HepG2 (cell line): ENCODE measurements at regions of chr2 and their contacts with region 1.

Region 1: DNA sequence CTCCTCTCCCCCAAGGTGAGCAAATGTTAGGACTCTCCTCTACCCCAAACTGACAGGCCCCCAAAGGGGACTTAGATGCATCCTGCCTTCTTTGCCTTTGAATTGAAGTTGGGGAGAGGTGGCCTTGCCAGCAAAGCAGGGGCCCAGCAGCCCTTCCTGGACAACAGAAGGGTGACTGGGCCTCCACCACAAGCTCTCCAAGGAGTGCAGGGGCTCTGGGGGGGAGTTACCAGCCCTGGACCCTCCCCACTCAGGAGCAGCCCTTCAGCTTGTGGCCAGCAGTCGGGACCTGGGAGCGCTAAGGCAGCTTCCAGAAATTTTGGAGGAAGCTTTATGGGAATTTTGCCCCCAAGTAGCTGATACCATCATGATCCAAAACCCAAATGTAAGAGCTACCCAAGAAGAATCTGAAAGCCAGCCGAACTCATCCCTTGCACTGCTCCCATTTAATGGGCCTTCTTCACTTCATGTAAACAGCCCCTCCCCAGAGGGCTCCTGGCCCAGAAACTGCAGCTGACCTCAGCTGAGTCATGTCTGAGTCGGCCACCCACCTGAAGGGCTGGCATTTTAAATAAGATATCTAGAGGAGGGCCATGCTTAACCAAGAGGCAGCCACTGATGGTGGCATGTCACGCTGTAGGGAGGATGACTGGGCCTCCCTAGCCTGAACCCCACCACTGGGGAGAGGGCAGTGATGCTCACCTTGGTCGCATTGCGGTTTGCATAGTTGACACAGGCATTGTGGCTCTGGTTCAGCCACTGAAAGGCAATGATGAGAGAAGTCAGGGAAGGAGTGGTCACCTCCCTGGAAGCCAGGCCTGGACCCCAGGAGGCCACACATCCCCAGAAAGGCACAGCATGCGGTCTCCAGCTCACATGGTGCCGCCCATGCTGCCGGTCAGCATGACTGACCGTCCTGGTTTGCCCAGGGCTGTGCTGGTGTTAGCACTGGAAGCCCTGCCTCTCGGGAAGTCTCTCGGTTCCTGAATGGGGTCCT is 71.5 kb downstream of the SFXN5 start:
- DNase-seq: no peak
- ATAC-seq: no peak; the same call in 2 of the 3 replicates
- H3K4me3 ChIP-seq: no peak overlapping the region
- H3K27ac ChIP-seq: peak overlapping the region; percentile 73
- H3K4me1 ChIP-seq: peaks cover 27% of the 10 kb centered on the region
- H3K27me3 ChIP-seq: no peaks in the 10 kb centered on the region
- CTCF ChIP-seq: no peak
- EP300 ChIP-seq: no peak
- POLR2A ChIP-seq: no peak
- RAD21 ChIP-seq: no peak

Region 2: GRCh38 chr2:73020657-73021370 is 20.8 kb after region 1 on chr2:
- CTCF ChIA-PET with region 1: no interaction called
- POLR2A ChIA-PET with region 1: interaction called, 13 read pairs
- in situ Hi-C with region 1: no loop called
- intact Hi-C with region 1: no loop called
- DNase-seq: peak; percentile 97
- ATAC-seq: peak; percentile 91
- H3K4me3 ChIP-seq: peak overlapping the region in 1 of 3 experiments; percentile 29; a peak in 1 of 6 replicates
- H3K27ac ChIP-seq: peak overlapping the region; percentile 71
- H3K4me1 ChIP-seq: peaks cover 35% of the 10 kb centered on the region
- H3K27me3 ChIP-seq: no peaks in the 10 kb centered on the region
- CTCF ChIP-seq: 0 out of 2 replicates have a peak, but pooled peaks have one; percentile 14
- EP300 ChIP-seq: peak in 1 of 2 experiments; percentile 79; a peak in 2 of 4 replicates
- POLR2A ChIP-seq: no peak
- RAD21 ChIP-seq: peak; percentile 51

Region 3: DNA sequence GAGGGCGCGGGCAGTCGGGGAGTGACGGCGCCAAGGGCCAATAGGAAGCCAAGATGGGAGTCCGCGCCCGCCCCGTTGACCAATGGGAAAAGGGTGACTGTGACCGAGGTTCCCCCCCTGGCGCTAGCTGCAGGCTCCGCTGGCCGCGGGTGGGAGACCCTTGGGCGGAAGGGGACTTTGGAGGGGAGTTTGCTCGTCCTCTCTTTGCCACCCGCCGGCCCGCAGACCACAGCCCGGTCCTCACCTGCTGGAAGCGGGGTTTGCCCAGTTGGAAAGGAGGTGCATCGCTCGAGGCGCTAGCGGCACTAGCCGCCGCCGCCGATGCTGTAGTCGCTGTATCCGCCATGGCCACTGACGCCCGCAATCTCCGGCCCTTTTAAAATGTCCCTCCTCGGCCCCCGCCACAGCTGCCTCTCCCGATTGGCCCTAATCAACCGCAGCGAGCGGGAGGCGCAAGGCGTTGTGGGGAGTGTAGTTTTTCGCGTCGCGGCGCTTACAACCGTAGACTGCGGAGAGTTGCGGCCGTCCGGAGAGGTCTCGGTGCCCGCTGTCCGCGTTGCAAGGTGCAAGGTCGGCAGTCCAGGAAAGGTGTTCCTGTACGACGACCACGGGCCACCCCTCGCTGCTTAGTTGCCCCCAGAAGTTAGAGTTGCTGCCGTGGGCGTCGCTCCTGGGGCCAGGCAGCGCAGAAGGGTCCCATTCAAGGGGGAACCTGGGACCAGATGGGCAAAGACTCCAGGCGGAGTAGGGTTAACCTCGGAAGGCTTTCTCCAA is 71.5 kb after region 1 on chr2 and contains the start of gene SFXN5:
- CTCF ChIA-PET with region 1: no interaction called
- POLR2A ChIA-PET with region 1: interaction called, 11 read pairs
- in situ Hi-C with region 1: no loop called
- intact Hi-C with region 1: loop called (anchors 2 kb)
- DNase-seq: peak; percentile 95
- ATAC-seq: peak; percentile 89
- H3K4me3 ChIP-seq: peak within 1 kb of the TSS; percentile 81 to 98 (median 95)
- H3K27ac ChIP-seq: peak within 1 kb of the TSS; percentile 89
- H3K4me1 ChIP-seq: peaks cover 53% of the 10 kb centered on the region
- H3K27me3 ChIP-seq: no peaks in the 10 kb centered on the region; a peak in 1 of 5 replicates
- CTCF ChIP-seq: peak; percentile 33; the same call in 1 of the 2 replicates
- EP300 ChIP-seq: 0 out of 4 replicates have a peak, but pooled peaks of 1 of the 2 experiments have one; percentile 6
- POLR2A ChIP-seq: peak; percentile 82 to 90
- RAD21 ChIP-seq: peak; percentile 34; the same call in 1 of the 2 replicates
- total RNA-seq, gene SFXN5: 22.2 and 34.9 TPM in 2 replicates

Region 4: GRCh38 chr2:74778381-74779264 is 1778.6 kb after region 1 on chr2:
- CTCF ChIA-PET with region 1: no interaction called
- POLR2A ChIA-PET with region 1: no interaction called
- in situ Hi-C with region 1: no loop called
- intact Hi-C with region 1: no loop called
- DNase-seq: peak; percentile 74
- ATAC-seq: peak; percentile 92
- H3K4me3 ChIP-seq: peak overlapping the region; percentile 14 to 67 (median 44)
- H3K27ac ChIP-seq: peak overlapping the region; percentile 53
- H3K4me1 ChIP-seq: peaks cover 47% of the 10 kb centered on the region
- H3K27me3 ChIP-seq: peaks cover 0 to 29% of the 10 kb centered on the region in 2 experiments; a peak in 3 of 5 replicates
- CTCF ChIP-seq: peak; percentile 36; the same call in 1 of the 2 replicates
- EP300 ChIP-seq: peak; percentile 13 to 53; a peak in 2 of 4 replicates
- POLR2A ChIP-seq: peak in 1 of 2 experiments; percentile 47; a peak in 2 of 4 replicates
- RAD21 ChIP-seq: peak; percentile 52; the same call in 1 of the 2 replicates